Activated T-helper 1 cell treated with anti-CD3 and anti-CD28 coated beads, Interleukin-12 subunit alpha, Interleukin-12 subunit beta, Interleukin-2, Interleukin-4 antibody, amounts not matched to agents 30 ng/mL and 10 ng/mL and 1 ng/mL, durations not matched to agents 14 hours and 24 hours and 36 hours (primary cell): ENCODE measurements at regions of chrX and their contacts with region 1.

Region 1: DNA sequence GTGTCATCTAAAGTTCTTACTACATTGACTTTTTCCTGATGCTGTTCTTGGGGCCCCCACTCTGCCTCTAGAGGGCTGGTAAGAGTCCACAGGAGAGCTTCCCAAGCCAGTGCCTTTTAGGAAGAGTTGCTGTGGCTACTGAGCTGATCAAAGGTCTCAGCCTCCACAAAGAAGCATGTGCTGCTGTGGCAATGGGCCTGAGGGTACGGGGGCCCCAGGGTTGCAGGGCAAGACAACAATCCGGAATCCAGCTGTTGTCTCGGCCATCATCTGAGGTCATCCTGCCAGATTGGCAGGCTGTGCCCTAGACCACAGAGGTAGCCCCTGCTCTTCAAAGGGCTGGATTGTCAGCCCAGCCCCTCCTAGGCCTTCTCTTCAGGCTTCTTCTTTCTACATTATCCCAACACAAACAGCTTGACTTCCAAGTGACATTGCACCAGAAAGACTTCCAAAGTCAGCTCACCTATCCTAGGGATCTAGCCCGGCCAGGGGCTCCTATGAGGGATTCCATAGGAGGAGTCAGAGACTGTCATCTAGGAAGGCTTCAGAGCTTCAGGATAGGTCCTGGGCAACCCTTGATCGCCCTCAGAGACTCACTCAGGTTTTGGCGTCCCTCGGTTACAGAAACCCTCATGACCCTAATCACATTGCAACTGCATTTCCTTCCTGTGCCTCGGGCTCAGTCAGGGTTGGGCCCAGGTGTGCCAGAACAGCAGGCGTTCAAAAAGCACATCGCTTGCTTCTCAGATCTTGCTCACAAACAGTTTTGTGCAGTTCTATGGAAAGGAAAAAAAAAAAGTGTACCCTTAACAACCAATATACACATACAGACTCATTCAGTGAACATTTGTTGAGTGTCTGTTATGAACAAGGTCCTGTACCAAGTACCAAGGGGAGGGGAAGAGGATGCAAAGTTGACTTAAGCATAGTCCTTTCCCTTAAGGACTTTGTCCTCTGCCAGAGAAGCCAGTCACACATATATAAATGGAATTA is 27.8 kb downstream of the SLC25A5 start:
- DNase-seq: no peak
- H3K4me3 Mint-ChIP-seq: no peak overlapping the region
- H3K27ac Mint-ChIP-seq: no peak overlapping the region
- H3K4me1 Mint-ChIP-seq: no peaks in the 10 kb centered on the region
- H3K27me3 Mint-ChIP-seq: no peaks in the 10 kb centered on the region

Region 2: GRCh38 chrX:119638725-119639471 is 142.9 kb after region 1 on chrX:
- intact Hi-C with region 1: no loop called
- DNase-seq: no peak
- H3K4me3 Mint-ChIP-seq: no peak overlapping the region
- H3K27ac Mint-ChIP-seq: peak overlapping the region; percentile 40
- H3K4me1 Mint-ChIP-seq: peaks cover 19% of the 10 kb centered on the region
- H3K27me3 Mint-ChIP-seq: no peaks in the 10 kb centered on the region

Region 3: DNA sequence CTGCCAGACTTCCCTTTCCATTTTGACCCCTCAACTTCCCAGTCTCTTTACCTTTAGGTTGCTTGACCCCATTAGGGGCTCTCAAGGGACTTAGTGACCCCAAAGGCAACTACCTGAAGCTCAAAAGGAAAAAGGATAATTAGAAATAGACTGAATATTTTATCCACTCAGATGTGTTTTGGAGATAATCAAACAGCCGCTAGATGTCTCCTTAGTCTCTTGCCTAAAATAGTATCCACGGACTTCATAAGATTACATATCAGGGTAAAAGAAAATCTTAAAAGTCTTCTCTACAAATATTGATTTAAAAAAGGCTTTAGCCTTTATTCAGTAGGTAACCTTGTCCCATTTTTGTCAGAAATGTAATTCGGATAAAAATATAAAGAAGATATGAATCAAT is 641.4 kb after region 1 on chrX:
- intact Hi-C with region 1: loop called (anchors 10 kb)
- DNase-seq: no peak
- H3K4me3 Mint-ChIP-seq: no peak overlapping the region
- H3K27ac Mint-ChIP-seq: no peak overlapping the region
- H3K4me1 Mint-ChIP-seq: peaks cover 12% of the 10 kb centered on the region
- H3K27me3 Mint-ChIP-seq: peaks cover 3% of the 10 kb centered on the region